ENCODE measurements at regions of chr12 and their contacts with region 1.

Region 1: GRCh38 chr12:12505544-12506495 is 56.8 kb downstream of the DUSP16 start:
- DNase-seq: no peak
- ATAC-seq: peak; percentile 55 to 86 (median 83)
- H3K4me3 ChIP-seq: peak overlapping the region in 9 of 12 donors; percentile 22 to 49 (median 32)
- H3K27ac ChIP-seq: peak overlapping the region; percentile 29 to 86 (median 72)
- H3K4me1 ChIP-seq: peaks cover 6 to 65% (median 44%) of the 10 kb centered on the region in 12 donors
- H3K27me3 ChIP-seq: no peaks in the 10 kb centered on the region
- CTCF ChIP-seq: no peak
- POLR2A ChIP-seq: no peak

Region 2: DNA sequence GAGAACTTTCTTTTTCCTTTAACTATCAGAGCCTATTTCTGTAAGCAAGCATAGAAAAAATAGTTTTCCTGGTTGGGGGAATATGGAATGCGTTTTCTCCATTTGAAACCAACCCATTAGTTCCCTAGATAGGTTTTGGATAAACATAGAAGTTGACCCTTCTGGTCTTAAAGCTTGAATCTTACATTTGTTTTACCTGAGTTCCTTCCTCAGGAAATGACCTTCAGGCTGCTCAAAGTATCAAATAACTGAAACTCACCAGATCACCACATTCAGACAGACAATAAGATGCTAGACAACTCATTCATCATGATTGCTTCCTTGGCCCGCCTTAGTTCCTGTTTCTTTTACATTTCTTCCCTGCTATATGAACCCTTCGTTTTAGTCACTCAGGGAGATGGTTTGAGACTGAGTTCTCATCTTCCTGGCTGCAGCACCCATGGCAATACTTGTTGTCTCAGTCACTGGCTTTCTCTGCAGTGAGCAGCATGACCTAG is 291.1 kb before region 1 on chr12:
- intact Hi-C with region 1: no loop called
- DNase-seq: no peak
- ATAC-seq: no peak
- H3K4me3 ChIP-seq: no peak overlapping the region
- H3K27ac ChIP-seq: no peak overlapping the region
- H3K4me1 ChIP-seq: peaks cover 0 to 30% (median 12%) of the 10 kb centered on the region in 12 donors
- H3K27me3 ChIP-seq: no peaks in the 10 kb centered on the region
- CTCF ChIP-seq: no peak
- POLR2A ChIP-seq: no peak

Region 3: GRCh38 chr12:12540261-12541013 is 34.6 kb after region 1 on chr12:
- intact Hi-C with region 1: loop called in 1 of 10 experiments (anchors 5 kb)
- DNase-seq: no peak
- ATAC-seq: peak in 1 of 4 donors; percentile 42
- H3K4me3 ChIP-seq: no peak overlapping the region
- H3K27ac ChIP-seq: no peak overlapping the region
- H3K4me1 ChIP-seq: peaks cover 0 to 39% (median 12%) of the 10 kb centered on the region in 12 donors
- H3K27me3 ChIP-seq: no peaks in the 10 kb centered on the region
- CTCF ChIP-seq: no peak
- POLR2A ChIP-seq: no peak

Region 4: GRCh38 chr12:12551115-12551514 is 45.3 kb after region 1 on chr12:
- intact Hi-C with region 1: no loop called
- DNase-seq: no peak
- ATAC-seq: no peak
- H3K4me3 ChIP-seq: no peak overlapping the region
- H3K27ac ChIP-seq: no peak overlapping the region
- H3K4me1 ChIP-seq: peaks cover 0 to 20% (median 4%) of the 10 kb centered on the region in 12 donors
- H3K27me3 ChIP-seq: no peaks in the 10 kb centered on the region
- CTCF ChIP-seq: no peak
- POLR2A ChIP-seq: no peak

Region 5: DNA sequence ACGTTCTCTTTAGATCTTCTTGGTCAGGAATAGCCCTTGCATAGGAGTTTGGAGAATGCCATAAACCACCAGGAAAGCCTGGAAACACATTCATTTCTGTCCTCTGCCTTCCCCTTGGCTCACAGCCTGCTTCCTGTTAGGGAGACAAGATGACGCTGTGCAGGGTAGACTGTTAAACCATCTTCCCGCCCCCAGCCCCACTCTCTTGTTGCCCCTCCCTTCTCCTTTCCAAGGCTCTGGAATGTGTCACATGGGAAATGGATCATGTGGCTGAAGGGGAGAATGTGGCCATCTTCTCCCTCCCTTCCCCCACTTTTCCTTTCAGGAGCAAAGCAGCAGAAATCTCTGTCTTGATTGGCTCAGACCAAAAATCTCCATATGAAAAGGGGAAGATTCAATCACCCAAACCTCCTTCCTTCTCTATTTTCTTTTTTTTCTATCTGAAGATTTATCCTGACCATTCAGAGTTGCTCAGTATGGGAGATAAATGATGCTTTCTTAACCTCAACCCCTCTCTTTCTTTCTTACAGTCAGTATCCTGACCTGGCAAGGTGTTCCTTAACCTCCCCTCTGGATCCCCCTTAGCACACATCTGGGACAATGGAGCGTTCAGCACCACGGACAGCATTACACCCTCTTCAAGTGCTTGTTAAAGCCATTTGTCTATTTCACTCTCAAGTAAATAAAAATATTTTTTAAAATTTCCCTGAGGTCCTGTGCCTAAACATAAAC is 178.7 kb after region 1 on chr12:
- intact Hi-C with region 1: no loop called
- DNase-seq: peak in 3 of 5 donors; percentile 16 to 57 (median 32)
- ATAC-seq: peak in 2 of 4 donors; percentile 57 to 58
- H3K4me3 ChIP-seq: peak overlapping the region in 2 of 12 donors; percentile 3 to 9
- H3K27ac ChIP-seq: no peak overlapping the region
- H3K4me1 ChIP-seq: peaks cover 0 to 7% (median 0%) of the 10 kb centered on the region in 12 donors
- H3K27me3 ChIP-seq: no peaks in the 10 kb centered on the region
- CTCF ChIP-seq: no peak
- POLR2A ChIP-seq: no peak